Activated CD4-positive, alpha-beta T cell treated with anti-CD3 and anti-CD28 coated beads, Interleukin-2, amount 10 ng/mL, durations not matched to agents 24 days and 14 days (primary cell): ENCODE measurements at regions of chr16 and their contacts with region 1.

Region 1: DNA sequence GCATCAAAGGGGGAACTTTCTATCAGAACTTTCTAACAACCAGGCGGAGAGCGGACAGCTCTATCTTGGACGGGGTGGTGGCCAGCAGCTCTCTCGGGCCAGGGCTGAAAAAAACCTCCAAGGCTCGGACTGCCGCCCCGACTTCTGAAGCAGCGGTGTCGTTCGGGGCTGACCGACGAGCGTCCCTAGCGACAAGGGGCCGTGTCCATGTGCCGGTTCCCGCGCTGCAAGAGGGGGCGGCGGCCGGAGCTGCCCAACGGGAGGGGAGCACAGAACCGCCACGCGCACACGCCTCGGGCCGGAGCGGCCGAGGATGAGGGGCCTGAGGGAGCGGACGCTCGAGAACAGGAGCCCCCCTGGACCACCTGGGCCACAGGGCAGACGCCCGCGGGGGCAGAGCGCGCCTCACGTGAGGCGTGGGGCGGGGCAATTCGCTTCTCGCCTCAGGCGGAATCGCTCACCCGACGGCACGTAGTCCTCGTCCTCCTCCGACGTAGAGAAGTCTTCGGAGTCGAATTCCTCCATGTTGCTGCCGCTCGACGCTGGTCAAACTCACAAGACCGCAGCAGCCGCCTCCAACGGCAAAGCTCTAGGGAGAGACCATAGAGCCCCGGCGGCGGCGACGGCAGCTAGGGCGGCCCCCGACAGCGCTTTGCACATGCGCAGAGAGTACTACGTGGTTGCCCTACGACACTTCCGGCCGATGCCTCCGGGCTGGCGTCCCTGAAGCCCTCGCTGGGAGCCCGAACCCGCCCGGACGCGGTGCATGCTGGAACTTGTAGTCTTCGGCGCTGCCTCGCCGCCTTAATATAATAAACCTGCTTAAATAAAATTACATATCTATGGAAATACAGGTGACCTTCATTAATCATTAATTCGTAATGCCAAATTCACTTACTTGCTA is at the start of gene CFDP1:
- DNase-seq: peak; percentile 99
- H3K4me3 Mint-ChIP-seq: peak within 1 kb of the TSS; percentile 83
- H3K27ac Mint-ChIP-seq: peak within 1 kb of the TSS; percentile 94
- H3K4me1 Mint-ChIP-seq: peaks cover 23% of the 10 kb centered on the region
- H3K27me3 Mint-ChIP-seq: no peaks in the 10 kb centered on the region
- total RNA-seq, gene CFDP1: 33.7 and 38.9 TPM in 2 replicates

Region 2: GRCh38 chr16:75288596-75289120 is 144.4 kb before region 1 on chr16:
- intact Hi-C with region 1: no loop called
- DNase-seq: peak; percentile 87
- H3K4me3 Mint-ChIP-seq: peak overlapping the region; percentile 34
- H3K27ac Mint-ChIP-seq: peak overlapping the region; percentile 59
- H3K4me1 Mint-ChIP-seq: peaks cover 14% of the 10 kb centered on the region
- H3K27me3 Mint-ChIP-seq: peaks cover 8% of the 10 kb centered on the region

Region 3: GRCh38 chr16:75379911-75380847 is 52.9 kb before region 1 on chr16:
- intact Hi-C with region 1: loop called (anchors 1 kb)
- DNase-seq: peak; percentile 81
- H3K4me3 Mint-ChIP-seq: peak overlapping the region; percentile 62
- H3K27ac Mint-ChIP-seq: peak overlapping the region; percentile 68
- H3K4me1 Mint-ChIP-seq: peaks cover 28% of the 10 kb centered on the region
- H3K27me3 Mint-ChIP-seq: peaks cover 33% of the 10 kb centered on the region

Region 4: DNA sequence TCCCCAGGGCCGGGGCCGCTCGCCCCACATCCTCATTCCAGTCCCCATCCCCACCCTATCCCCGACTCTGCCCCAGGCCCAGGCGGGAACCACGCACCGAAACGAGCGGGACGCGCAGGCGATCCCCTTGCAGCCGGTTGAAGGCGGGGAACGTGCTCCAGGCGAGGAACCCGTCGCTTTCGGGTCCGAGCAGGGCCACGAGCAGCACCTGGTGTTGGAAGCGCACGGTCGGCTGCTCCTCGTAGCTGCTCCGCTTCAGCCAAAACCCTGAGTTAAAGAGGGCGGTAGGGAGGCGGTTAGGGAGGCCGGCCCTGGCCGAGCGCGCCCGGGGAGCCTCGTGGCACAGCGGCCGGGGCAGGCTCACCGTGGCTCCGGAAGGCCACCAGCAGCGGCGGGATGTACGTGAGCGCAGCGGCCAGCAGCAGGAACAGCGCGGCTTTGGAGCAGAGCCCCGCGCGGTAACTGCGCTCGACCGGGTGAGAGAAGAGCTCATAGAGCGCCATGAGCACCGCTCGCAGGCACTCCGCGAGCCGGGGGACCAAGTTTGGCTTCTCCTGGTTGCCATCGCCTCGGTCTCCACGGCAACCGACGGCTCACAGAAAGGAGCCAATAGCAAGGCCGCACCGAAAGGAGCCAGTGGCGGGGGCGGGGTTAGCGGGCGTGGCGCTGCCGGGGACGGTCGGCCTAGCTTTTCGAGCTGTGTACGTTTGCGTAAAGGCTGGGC is 122.8 kb after region 1 on chr16 and contains the start of gene TMEM231:
- intact Hi-C with region 1: loop called (anchors 2 kb)
- DNase-seq: peak; percentile 99
- H3K4me3 Mint-ChIP-seq: peak within 1 kb of the TSS; percentile 92
- H3K27ac Mint-ChIP-seq: peak within 1 kb of the TSS; percentile 90
- H3K4me1 Mint-ChIP-seq: peaks cover 8% of the 10 kb centered on the region
- H3K27me3 Mint-ChIP-seq: peaks cover 20% of the 10 kb centered on the region
- total RNA-seq, gene TMEM231: 4.0 and 4.4 TPM in 2 replicates

Region 5: DNA sequence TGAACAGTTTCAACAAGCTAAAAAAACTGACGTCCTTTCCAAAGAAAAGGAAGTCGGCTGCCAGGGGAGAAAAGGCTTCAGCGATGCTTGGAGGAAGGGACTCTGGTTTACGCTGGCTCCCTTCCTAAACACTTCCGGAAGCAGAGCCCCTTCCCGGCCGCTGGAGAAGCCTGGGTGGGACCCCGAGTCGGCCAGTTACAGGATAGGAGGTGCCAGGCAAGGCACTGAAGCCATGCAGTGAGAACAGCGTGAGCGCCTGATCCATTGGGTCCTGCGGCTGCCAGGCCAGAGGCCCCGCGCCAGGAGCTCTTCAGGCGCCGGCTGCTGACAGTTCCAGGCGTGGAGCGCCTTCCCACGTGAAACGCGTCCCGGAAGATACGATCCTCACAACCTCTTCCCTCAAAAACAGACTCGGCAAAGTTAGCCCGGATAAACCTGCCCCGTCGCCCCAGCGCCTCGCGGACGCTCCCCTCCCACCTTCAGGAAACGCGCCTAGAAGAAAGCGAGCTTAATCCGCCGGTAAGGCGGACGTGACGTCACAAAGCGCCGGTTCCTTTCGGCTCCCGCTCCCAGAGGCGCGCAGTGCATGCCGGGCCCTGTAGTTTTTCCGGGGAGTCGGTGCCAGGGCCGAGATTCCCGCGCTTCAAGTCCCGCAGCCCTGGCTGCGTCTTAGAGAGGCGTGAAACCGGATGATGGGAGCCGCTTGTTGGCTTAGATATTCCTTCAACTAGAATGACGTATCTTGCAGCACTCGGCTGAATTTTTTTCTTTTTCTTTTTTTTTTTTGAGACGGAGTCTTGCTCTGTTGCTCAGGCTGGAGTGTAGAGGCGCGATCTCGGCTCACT is 189.9 kb after region 1 on chr16 and contains the start of gene ADAT1:
- intact Hi-C with region 1: loop called (anchors 1 kb)
- DNase-seq: peak; percentile 99
- H3K4me3 Mint-ChIP-seq: peak within 1 kb of the TSS; percentile 97
- H3K27ac Mint-ChIP-seq: peak within 1 kb of the TSS; percentile 97
- H3K4me1 Mint-ChIP-seq: peaks cover 31% of the 10 kb centered on the region
- H3K27me3 Mint-ChIP-seq: no peaks in the 10 kb centered on the region
- total RNA-seq, gene ADAT1: 58.6 and 64.4 TPM in 2 replicates